ENCODE measurements at regions of chr20 and their contacts with region 1.

Region 1: DNA sequence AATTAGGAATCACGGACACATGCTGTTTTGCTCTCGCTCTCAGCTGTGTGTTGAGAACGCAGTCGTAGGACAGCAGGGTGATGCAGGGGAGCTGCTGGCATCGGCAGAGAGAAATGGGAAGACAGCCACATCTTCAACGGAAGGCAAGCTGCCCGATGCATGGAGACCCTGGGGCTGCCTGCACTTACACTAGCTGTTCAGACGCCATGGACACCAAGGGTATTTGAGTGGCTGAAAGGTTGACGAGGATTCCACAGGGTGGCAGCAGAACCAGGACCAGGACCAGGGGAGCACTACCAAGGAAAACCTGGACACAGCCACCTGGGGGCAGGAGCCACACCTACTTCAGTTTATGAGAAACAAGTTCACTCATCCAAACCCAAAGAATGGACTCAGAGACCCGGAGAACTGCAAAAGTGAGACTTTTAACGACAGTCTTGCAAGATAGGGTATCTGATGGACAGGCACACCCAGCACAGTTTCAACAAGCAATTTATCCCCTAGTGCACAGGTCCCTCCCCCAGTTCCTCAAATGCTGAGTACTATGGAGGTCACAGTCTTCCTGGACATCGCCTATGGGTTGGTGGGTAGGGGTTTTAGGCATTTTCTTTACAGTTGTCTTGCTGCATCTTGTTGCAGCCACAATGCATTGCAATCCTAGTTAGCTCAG is 56.3 kb upstream of the ENTPD6 start:
- DNase-seq: no peak
- ATAC-seq: no peak
- H3K4me3 ChIP-seq: no peak overlapping the region
- H3K27ac ChIP-seq: no peak overlapping the region
- H3K4me1 ChIP-seq: no peaks in the 10 kb centered on the region
- H3K27me3 ChIP-seq: no peaks in the 10 kb centered on the region; a peak in 3 of 4 replicates
- CTCF ChIP-seq: 0 out of 6 replicates have a peak, but pooled peaks of 1 of the 3 experiments have one; percentile 11
- EP300 ChIP-seq: no peak
- POLR2A ChIP-seq: no peak
- RAD21 ChIP-seq: no peak

Region 2: GRCh38 chr20:25178563-25179438 is 39.6 kb after region 1 on chr20:
- CTCF ChIA-PET with region 1: no interaction called
- POLR2A ChIA-PET with region 1: no interaction called
- RAD21 ChIA-PET with region 1: no interaction called
- SMC1A ChIA-PET with region 1: no interaction called
- in situ Hi-C with region 1: no loop called
- intact Hi-C with region 1: loop called (anchors 1 kb)
- DNase-seq: no peak
- ATAC-seq: peak; percentile 79
- H3K4me3 ChIP-seq: no peak overlapping the region
- H3K27ac ChIP-seq: no peak overlapping the region
- H3K4me1 ChIP-seq: no peaks in the 10 kb centered on the region
- H3K27me3 ChIP-seq: no peaks in the 10 kb centered on the region
- CTCF ChIP-seq: peak; percentile 77 to 93 (median 84)
- EP300 ChIP-seq: no peak
- POLR2A ChIP-seq: no peak
- RAD21 ChIP-seq: peak; percentile 93